Activated CD4-positive, alpha-beta T cell treated with anti-CD3 and anti-CD28 coated beads, Interleukin-2, amount 10 ng/mL, durations not matched to agents 7 days and 5 days (primary cell): ENCODE measurements at regions of chr2 and their contacts with region 1.

Region 1: DNA sequence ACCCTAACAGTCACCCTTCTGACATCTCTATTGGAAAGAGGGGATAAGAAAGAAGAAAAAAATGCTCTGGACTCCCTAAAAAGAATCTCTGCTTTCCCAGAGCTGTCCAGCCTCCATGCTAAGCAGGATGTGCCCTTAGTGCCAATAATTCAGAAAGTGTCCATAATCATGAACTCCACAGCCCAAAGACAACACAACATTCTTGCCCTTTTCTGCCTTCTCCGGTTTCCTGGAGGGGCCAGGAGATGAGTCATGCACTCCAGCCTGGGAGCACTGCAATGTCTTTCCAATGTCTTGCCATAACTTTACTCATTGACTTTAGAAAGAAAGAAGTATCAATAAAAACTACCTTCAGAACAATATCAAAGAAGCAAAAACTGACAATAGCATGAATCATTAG is 44.0 kb downstream of the KLF7 start:
- DNase-seq: no peak
- H3K4me3 Mint-ChIP-seq: no peak overlapping the region
- H3K27ac Mint-ChIP-seq: no peak overlapping the region
- H3K4me1 Mint-ChIP-seq: peaks cover 33% of the 10 kb centered on the region
- H3K27me3 Mint-ChIP-seq: no peaks in the 10 kb centered on the region

Region 2: DNA sequence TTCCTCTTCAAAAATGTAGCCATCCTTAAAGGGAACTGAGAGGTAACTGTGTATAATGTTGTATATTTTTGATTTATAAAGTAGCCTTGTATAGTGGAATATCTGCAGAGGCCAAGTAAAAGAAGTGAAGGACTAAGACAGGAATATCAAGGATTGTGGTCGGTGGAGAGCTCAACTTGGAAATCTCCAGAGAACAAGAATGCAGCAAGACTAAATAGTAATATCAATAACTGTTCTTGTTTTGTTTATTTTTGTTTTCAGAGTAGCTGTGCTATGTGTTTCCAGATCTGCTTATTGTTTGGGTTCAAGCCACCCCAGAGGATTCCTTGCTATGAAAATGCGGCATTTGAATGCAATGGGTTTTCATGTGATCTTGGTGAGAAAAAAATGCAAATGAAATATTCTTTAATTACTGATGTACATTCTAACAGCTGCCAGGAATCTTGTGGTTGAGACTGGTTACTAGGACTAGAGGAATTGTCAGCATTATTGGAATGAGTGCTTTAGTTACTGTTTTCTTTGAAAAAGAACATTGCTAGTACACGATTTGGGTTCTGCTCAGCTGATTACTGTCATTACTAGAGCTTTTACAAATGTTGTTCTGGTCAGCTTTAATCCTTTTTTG is 331.4 kb before region 1 on chr2:
- CTCF ChIA-PET with region 1: no interaction called
- POLR2A ChIA-PET with region 1: no interaction called
- DNase-seq: no peak
- H3K4me3 Mint-ChIP-seq: no peak overlapping the region
- H3K27ac Mint-ChIP-seq: no peak overlapping the region
- H3K4me1 Mint-ChIP-seq: no peaks in the 10 kb centered on the region
- H3K27me3 Mint-ChIP-seq: no peaks in the 10 kb centered on the region

Region 3: DNA sequence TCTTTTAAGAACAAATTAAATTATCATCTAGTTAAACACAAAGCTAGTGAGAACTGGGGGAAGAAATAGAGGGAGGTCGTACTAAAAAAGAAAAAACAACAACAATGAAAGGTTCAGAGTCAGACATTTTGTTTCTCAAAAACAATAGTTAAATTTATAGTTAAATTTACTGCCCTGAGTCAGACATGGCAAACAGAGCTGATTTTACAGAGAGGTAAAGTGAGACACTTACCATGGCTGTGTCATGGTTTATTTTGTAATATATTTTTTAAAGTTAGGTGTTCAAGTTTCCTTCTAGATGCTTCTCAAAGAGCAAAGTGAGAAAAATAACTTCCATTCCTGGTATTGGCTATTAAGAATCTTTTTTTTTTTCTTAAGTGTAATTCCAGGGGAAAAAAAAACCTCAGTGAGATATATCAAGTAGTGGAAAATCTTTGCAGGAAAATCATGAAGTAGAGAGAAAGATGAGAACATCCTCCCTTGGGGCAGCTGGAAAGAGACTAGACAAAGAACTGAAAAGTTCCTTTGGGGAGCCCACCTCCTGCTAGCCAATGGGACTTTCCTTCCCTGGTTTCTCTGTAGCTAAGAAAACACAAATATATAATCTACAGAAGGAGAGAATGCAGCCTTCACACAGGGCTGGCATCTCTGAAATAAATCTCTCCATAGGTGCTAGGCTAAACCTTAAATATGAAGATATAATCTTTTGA is 31.6 kb after region 1 on chr2:
- CTCF ChIA-PET with region 1: interaction called, 3 read pairs
- POLR2A ChIA-PET with region 1: interaction called, 15 read pairs
- DNase-seq: no peak
- H3K4me3 Mint-ChIP-seq: no peak overlapping the region
- H3K27ac Mint-ChIP-seq: no peak overlapping the region
- H3K4me1 Mint-ChIP-seq: peaks cover 90% of the 10 kb centered on the region
- H3K27me3 Mint-ChIP-seq: no peaks in the 10 kb centered on the region

Region 4: DNA sequence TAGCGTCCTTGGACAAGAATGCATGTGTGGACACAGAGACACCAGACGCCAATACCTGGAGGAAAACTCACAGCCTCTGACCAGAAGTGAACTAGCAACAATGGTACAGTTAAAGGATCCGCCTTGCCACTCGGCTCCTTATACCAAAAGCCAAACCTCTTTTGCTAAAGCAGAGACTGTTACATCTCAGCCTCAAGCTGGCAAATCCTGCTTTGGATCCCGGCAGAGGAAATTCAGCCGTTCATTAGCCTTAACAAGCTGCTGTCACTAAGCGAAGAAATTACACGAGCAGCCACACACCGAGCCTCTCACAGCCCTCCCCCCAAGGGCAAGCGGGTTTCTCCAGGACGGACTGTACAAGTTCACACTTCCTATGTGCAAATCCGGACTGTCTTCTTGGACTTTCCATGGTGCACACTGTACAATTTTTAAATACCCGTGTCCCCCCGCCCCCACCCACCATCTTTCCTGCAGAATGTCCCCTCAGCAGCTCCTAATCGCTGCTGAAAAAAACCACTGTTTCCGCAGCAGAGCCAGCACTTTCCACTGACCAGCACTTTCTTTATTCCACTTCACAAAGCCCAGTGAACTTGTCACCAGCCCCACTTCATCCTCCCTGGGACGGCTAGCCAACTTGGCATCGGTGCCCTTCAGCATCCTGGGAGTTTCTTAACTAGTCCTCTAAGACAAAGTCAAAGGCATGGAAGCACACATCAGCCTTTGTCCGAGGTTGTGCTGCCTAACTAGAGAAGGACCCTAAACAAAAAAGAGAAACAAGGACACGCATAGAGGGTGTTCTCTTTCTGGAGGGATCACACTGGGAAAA is 42.4 kb after region 1 on chr2:
- CTCF ChIA-PET with region 1: no interaction called
- POLR2A ChIA-PET with region 1: no interaction called
- DNase-seq: peak; percentile 21
- H3K4me3 Mint-ChIP-seq: peak overlapping the region; percentile 92
- H3K27ac Mint-ChIP-seq: peak overlapping the region; percentile 98
- H3K4me1 Mint-ChIP-seq: peaks cover 45% of the 10 kb centered on the region
- H3K27me3 Mint-ChIP-seq: no peaks in the 10 kb centered on the region